Activated naive CD8-positive, alpha-beta T cell treated with anti-CD3 and anti-CD28 coated beads, Interleukin-2, amount 10 ng/mL, durations not matched to agents 7 days and 5 days (primary cell): ENCODE measurements at regions of chrX and their contacts with region 1.

Region 1: GRCh38 chrX:53422086-53422860 is at the start of gene SMC1A:
- DNase-seq: peak; percentile 89
- ATAC-seq: peak; percentile 87
- H3K4me3 Mint-ChIP-seq: peak within 1 kb of the TSS; percentile 89
- H3K27ac Mint-ChIP-seq: peak within 1 kb of the TSS; percentile 92
- H3K4me1 Mint-ChIP-seq: peaks cover 16% of the 10 kb centered on the region
- H3K27me3 Mint-ChIP-seq: no peaks in the 10 kb centered on the region
- total RNA-seq, gene SMC1A: 117 TPM

Region 2: DNA sequence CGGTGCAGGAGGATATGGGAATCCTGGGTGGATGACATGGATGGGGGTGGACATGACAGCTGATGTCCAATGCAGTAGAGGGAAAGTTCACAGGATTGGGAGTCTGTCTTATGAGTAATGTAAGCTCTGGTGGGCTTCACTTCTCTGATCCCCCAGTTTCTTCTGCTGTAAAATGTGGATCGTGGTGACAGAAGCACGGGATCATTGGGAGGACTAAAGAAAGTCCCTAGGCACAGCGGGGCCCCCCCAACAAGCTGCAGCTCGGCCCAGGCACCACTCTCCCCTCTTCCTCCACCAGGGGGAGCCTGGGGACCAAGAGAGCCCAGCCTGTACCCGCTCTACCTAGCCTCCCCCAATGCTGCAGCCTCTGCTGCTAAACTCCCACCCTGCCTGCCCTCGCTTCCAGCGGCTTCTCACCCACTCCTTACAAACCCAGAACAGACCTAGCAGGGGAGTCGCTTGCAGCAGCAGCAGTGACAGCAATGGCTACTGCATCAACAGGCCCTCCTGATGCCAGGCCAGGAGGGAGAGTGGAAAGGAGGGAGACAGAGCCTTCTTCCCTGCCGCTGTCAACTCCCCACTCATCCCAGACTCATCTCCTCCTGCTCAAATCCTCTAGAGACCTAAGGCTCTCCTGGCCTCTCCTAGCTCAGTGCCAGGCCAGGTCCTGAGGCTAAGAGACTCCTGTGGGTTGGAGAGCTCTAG is 104.8 kb before region 1 on chrX:
- POLR2A ChIA-PET with region 1: no interaction called
- DNase-seq: peak; percentile 74
- ATAC-seq: peak; percentile 80
- H3K4me3 Mint-ChIP-seq: no peak overlapping the region
- H3K27ac Mint-ChIP-seq: no peak overlapping the region
- H3K4me1 Mint-ChIP-seq: peaks cover 11% of the 10 kb centered on the region
- H3K27me3 Mint-ChIP-seq: peaks cover 39% of the 10 kb centered on the region

Region 3: GRCh38 chrX:53433651-53434639 is 11.7 kb after region 1 on chrX and contains the start of gene HSD17B10:
- POLR2A ChIA-PET with region 1: interaction called, 25 read pairs
- DNase-seq: peak; percentile 87
- ATAC-seq: peak; percentile 95
- H3K4me3 Mint-ChIP-seq: peak within 1 kb of the TSS; percentile 89
- H3K27ac Mint-ChIP-seq: peak within 1 kb of the TSS; percentile 89
- H3K4me1 Mint-ChIP-seq: peaks cover 16% of the 10 kb centered on the region
- H3K27me3 Mint-ChIP-seq: no peaks in the 10 kb centered on the region
- total RNA-seq, gene HSD17B10: 64.3 to 68.2 TPM